ENCODE measurements at regions of chr6 and their contacts with region 1.

Region 1: GRCh38 chr6:2221726-2222274 is 23.6 kb downstream of the GMDS start:
- DNase-seq: peak; percentile 14 to 54 (median 38)
- H3K4me3 ChIP-seq: peak overlapping the region in 6 of 7 experiments; percentile 64 to 100 (median 80)
- H3K27ac ChIP-seq: peak overlapping the region; percentile 84 to 93
- H3K4me1 ChIP-seq: peaks cover 5 to 11% (median 9%) of the 10 kb centered on the region in 4 experiments
- H3K27me3 ChIP-seq: no peaks in the 10 kb centered on the region

Region 2: GRCh38 chr6:2141644-2142290 is 80.0 kb before region 1 on chr6:
- CTCF ChIA-PET with region 1: no interaction called
- POLR2A ChIA-PET with region 1: no interaction called
- DNase-seq: peak; percentile 51 to 89 (median 84)
- H3K4me3 ChIP-seq: peak overlapping the region in 5 of 7 experiments; percentile 3 to 57 (median 52)
- H3K27ac ChIP-seq: peak overlapping the region; percentile 8 to 63
- H3K4me1 ChIP-seq: peaks cover 12 to 48% (median 33%) of the 10 kb centered on the region in 4 experiments
- H3K27me3 ChIP-seq: no peaks in the 10 kb centered on the region

Region 3: DNA sequence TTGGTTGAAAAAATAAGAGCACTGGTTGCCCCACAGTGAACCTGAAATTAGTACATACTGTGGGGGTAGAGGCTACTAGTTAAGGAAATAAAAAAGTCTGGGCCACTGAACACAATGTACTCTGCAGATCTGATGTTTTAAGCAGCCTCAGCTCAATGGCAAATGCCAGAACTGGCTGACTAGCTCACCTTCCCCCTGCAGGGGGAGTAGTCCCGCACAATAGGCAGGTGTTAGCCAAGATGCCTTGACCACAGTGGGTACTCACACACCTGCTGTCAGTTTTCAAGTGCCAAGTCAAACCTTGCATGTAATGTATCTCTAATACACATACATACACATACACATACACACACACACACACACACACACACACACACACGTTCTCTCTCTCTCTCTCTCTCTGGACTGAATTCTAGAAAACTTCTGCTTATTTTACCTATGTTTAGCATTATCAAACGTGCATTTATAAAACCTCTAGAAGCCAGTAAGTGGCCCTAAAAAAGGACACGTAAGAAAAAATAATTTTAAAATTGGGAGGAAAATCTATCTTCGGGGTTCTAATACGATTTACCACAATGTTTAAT is 12.5 kb before region 1 on chr6:
- CTCF ChIA-PET with region 1: interaction called, 11 read pairs
- POLR2A ChIA-PET with region 1: no interaction called
- DNase-seq: peak; percentile 44 to 58 (median 52)
- H3K4me3 ChIP-seq: no peak overlapping the region
- H3K27ac ChIP-seq: no peak overlapping the region
- H3K4me1 ChIP-seq: no peaks in the 10 kb centered on the region
- H3K27me3 ChIP-seq: no peaks in the 10 kb centered on the region